ENCODE measurements at regions of chr9 and their contacts with region 1.

Region 1: DNA sequence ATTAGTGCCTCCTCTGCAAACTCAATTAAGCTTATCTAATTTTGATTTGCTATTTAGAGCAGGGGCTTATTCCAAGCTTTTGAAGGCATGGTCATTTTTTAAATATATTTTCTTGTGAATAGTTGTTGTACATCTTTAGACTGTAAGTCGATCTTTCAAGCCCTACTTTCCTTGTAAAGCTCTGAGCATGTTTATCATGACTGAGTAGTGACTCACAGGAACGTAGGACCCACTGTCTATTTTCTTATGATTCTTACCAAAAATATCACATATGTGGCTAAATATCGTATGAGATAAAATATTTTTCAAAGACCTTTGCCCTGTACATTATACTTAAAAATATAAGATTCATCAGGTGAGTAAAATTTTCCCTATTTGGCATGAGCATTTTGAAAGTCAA is 440.4 kb upstream of the GRIN3A start:
- DNase-seq: no peak
- H3K4me3 ChIP-seq: no peak overlapping the region
- H3K27ac ChIP-seq: no peak overlapping the region
- H3K4me1 ChIP-seq: no peaks in the 10 kb centered on the region
- H3K27me3 ChIP-seq: no peaks in the 10 kb centered on the region
- CTCF ChIP-seq: no peak
- POLR2A ChIP-seq: no peak

Region 2: GRCh38 chr9:102113191-102113590 is 65.6 kb before region 1 on chr9:
- intact Hi-C with region 1: loop called in 1 of 2 experiments (anchors 10 kb)
- DNase-seq: no peak
- H3K4me3 ChIP-seq: no peak overlapping the region
- H3K27ac ChIP-seq: no peak overlapping the region
- H3K4me1 ChIP-seq: peaks cover 0 to 3% of the 10 kb centered on the region in 2 donors
- H3K27me3 ChIP-seq: no peaks in the 10 kb centered on the region
- CTCF ChIP-seq: no peak
- POLR2A ChIP-seq: no peak

Region 3: GRCh38 chr9:102534031-102534430 is 355.2 kb after region 1 on chr9:
- intact Hi-C with region 1: no loop called
- DNase-seq: no peak
- H3K4me3 ChIP-seq: no peak overlapping the region
- H3K27ac ChIP-seq: no peak overlapping the region
- H3K4me1 ChIP-seq: no peaks in the 10 kb centered on the region
- H3K27me3 ChIP-seq: no peaks in the 10 kb centered on the region
- CTCF ChIP-seq: no peak
- POLR2A ChIP-seq: no peak